ENCODE measurements at regions of chr1 and their contacts with region 1.

Region 1: DNA sequence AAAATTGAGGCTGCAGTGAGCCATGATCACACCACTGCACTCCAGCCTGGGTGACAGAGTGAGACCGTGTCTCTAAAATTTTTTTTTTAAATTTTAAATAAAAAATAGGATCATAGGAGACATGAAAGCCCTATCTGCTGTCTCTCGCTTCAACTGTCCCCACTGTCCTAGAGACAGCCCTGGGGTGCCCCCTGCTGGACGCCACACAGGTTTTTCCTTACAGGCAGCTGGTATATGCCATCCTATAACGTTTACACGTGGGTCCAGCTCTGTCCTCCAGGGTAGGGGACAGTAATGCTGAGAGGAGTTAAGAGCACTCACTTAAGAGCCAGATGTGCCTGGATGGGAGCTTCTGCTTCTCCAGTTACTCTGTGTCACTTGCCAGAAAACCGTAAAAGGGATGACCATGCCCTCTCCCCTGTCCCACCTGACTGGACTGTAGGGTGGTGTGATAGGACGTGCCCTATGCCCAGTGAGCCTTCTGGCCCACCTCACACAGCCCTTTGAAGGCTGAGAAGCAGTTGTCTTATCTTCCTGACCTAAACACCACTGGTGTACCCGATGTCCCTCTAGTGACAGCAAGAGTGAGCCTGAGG is 8.5 kb downstream of the FBXO2 start:
- DNase-seq: peak; percentile 49 to 64 (median 61)
- H3K4me3 ChIP-seq: no peak overlapping the region
- H3K4me3 Mint-ChIP-seq: no peak overlapping the region
- H3K27ac ChIP-seq: no peak overlapping the region
- H3K27ac Mint-ChIP-seq: no peak overlapping the region
- H3K4me1 ChIP-seq: peaks cover 4 to 15% of the 10 kb centered on the region in 2 donors
- H3K4me1 Mint-ChIP-seq: peaks cover 16% of the 10 kb centered on the region
- H3K27me3 ChIP-seq: peaks cover 5 to 20% of the 10 kb centered on the region in 2 donors
- H3K27me3 Mint-ChIP-seq: peaks cover 32 to 40% (median 34%) of the 10 kb centered on the region in 3 donors
- CTCF ChIP-seq: peak; percentile 90

Region 2: DNA sequence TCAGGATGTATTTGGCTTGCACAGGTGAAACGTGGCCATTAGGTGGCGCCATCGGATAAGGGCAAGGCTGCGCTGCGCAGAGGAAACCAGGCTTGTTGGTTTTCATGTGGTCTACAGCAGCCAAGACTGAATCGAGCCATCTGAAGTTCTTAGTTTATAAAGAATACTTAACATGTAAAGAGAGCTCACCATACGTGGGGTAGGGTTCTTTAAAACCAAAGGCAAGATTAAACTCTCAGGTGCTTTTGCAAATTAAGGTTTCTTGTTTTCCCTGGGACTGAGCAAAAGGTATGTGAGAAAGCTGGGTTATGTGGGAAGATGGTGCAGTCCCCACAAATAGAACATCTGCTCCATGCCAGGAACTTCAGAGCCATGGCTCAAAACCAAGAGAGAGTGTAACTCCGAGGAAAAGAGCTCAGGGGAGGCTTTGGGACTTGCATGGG is 608.0 kb before region 1 on chr1:
- intact Hi-C with region 1: loop called (anchors 5 to 10 kb)
- DNase-seq: peak; percentile 70 to 76 (median 75)
- H3K4me3 ChIP-seq: no peak overlapping the region
- H3K4me3 Mint-ChIP-seq: no peak overlapping the region
- H3K27ac ChIP-seq: no peak overlapping the region
- H3K27ac Mint-ChIP-seq: no peak overlapping the region
- H3K4me1 ChIP-seq: no peaks in the 10 kb centered on the region
- H3K4me1 Mint-ChIP-seq: no peaks in the 10 kb centered on the region
- H3K27me3 ChIP-seq: peaks cover 0 to 2% of the 10 kb centered on the region in 2 donors
- H3K27me3 Mint-ChIP-seq: peaks cover 0 to 1% (median 0%) of the 10 kb centered on the region in 3 donors
- CTCF ChIP-seq: peak; percentile 96

Region 3: DNA sequence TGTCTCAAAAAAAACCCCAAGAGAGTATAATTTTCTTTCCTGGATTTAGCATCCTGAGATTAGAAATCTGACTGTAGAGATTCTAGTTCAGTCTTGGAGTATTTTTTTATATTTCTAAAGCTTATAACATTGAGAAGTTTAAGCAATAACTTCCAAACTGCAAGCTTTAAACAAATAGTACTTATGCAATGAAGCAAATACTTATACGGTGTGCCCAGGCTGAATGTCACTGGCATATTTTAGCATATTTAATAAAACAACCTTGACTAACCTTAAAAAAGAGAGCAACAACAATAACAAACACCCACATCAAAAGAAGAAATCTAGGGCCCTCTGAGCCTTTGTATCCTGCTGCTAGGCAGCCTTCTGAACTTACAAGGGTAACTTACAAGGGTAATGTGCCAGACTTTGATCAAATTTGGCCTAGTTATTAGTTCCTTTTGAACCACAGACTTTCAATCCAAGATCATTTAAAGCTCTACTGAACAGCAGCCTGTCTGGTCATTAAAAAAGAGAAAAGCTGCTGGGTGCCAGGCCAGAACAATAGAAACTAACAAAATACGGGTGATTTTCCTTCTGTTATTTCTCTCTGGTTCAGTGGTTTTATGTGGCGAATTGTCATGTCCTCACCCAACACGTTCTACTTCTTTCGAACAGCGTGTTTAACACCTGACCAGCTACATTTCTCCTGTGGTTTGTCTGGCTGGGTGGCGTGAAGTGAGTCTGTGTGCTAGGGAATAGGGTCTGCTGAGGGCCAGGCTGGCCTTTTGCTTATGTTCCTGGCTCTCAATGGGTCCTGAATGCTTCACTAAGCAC is 399.7 kb before region 1 on chr1:
- intact Hi-C with region 1: loop called (anchors 1 to 2 kb)
- DNase-seq: no peak
- H3K4me3 ChIP-seq: no peak overlapping the region
- H3K4me3 Mint-ChIP-seq: no peak overlapping the region
- H3K27ac ChIP-seq: no peak overlapping the region
- H3K27ac Mint-ChIP-seq: peak overlapping the region in 1 of 7 donors; percentile 22
- H3K4me1 ChIP-seq: no peaks in the 10 kb centered on the region
- H3K4me1 Mint-ChIP-seq: no peaks in the 10 kb centered on the region
- H3K27me3 ChIP-seq: no peaks in the 10 kb centered on the region
- H3K27me3 Mint-ChIP-seq: peaks cover 0 to 2% (median 0%) of the 10 kb centered on the region in 3 donors
- CTCF ChIP-seq: no peak

Region 4: GRCh38 chr1:11337580-11338073 is 308.1 kb before region 1 on chr1:
- intact Hi-C with region 1: loop called in 1 of 2 experiments (anchors 5 kb)
- DNase-seq: peak in 2 of 3 donors; percentile 1 to 7
- H3K4me3 ChIP-seq: no peak overlapping the region
- H3K4me3 Mint-ChIP-seq: peak overlapping the region in 1 of 2 donors; percentile 7
- H3K27ac ChIP-seq: no peak overlapping the region
- H3K27ac Mint-ChIP-seq: no peak overlapping the region
- H3K4me1 ChIP-seq: no peaks in the 10 kb centered on the region
- H3K4me1 Mint-ChIP-seq: peaks cover 4% of the 10 kb centered on the region
- H3K27me3 ChIP-seq: peaks cover 0 to 21% of the 10 kb centered on the region in 2 donors
- H3K27me3 Mint-ChIP-seq: peaks cover 18 to 44% (median 25%) of the 10 kb centered on the region in 3 donors
- CTCF ChIP-seq: peak; percentile 72

Region 5: GRCh38 chr1:11719313-11720032 is 73.7 kb after region 1 on chr1:
- intact Hi-C with region 1: loop called (anchors 2 to 5 kb)
- DNase-seq: peak; percentile 84 to 89 (median 85)
- H3K4me3 ChIP-seq: peak overlapping the region; percentile 32 to 68 (median 45)
- H3K4me3 Mint-ChIP-seq: peak overlapping the region; percentile 81 to 89
- H3K27ac ChIP-seq: peak overlapping the region; percentile 76 to 84
- H3K27ac Mint-ChIP-seq: peak overlapping the region; percentile 91 to 96 (median 95)
- H3K4me1 ChIP-seq: peaks cover 33 to 41% of the 10 kb centered on the region in 2 donors
- H3K4me1 Mint-ChIP-seq: peaks cover 42% of the 10 kb centered on the region
- H3K27me3 ChIP-seq: no peaks in the 10 kb centered on the region
- H3K27me3 Mint-ChIP-seq: peaks cover 2 to 4% (median 4%) of the 10 kb centered on the region in 3 donors
- CTCF ChIP-seq: peak; percentile 98

Region 6: GRCh38 chr1:11749203-11749689 is 103.5 kb after region 1 on chr1:
- intact Hi-C with region 1: loop called (anchors 1 to 5 kb)
- DNase-seq: peak; percentile 53 to 57 (median 56)
- H3K4me3 ChIP-seq: no peak overlapping the region
- H3K4me3 Mint-ChIP-seq: no peak overlapping the region
- H3K27ac ChIP-seq: peak overlapping the region in 1 of 2 donors; percentile 52
- H3K27ac Mint-ChIP-seq: peak overlapping the region in 6 of 7 donors; percentile 52 to 91 (median 67)
- H3K4me1 ChIP-seq: peaks cover 3 to 29% of the 10 kb centered on the region in 2 donors
- H3K4me1 Mint-ChIP-seq: peaks cover 46% of the 10 kb centered on the region
- H3K27me3 ChIP-seq: no peaks in the 10 kb centered on the region
- H3K27me3 Mint-ChIP-seq: no peaks in the 10 kb centered on the region
- CTCF ChIP-seq: peak; percentile 92

Region 7: GRCh38 chr1:11893907-11894251 is 248.1 kb after region 1 on chr1:
- intact Hi-C with region 1: no loop called
- DNase-seq: peak; percentile 42 to 60 (median 60)
- H3K4me3 ChIP-seq: no peak overlapping the region
- H3K4me3 Mint-ChIP-seq: no peak overlapping the region
- H3K27ac ChIP-seq: no peak overlapping the region
- H3K27ac Mint-ChIP-seq: peak overlapping the region in 1 of 7 donors; percentile 53
- H3K4me1 ChIP-seq: peaks cover 10% of the 10 kb centered on the region in 2 donors
- H3K4me1 Mint-ChIP-seq: peaks cover 12% of the 10 kb centered on the region
- H3K27me3 ChIP-seq: peaks cover 8 to 23% of the 10 kb centered on the region in 2 donors
- H3K27me3 Mint-ChIP-seq: peaks cover 31 to 35% (median 32%) of the 10 kb centered on the region in 3 donors
- CTCF ChIP-seq: peak; percentile 91